ENCODE measurements at regions of chr6 and their contacts with region 1.

Region 1: GRCh38 chr6:125802943-125803377 is 12.2 kb downstream of the NCOA7 start:
- DNase-seq: no peak
- H3K4me3 Mint-ChIP-seq: no peak overlapping the region
- H3K27ac Mint-ChIP-seq: no peak overlapping the region
- H3K4me1 Mint-ChIP-seq: peaks cover 52% of the 10 kb centered on the region
- H3K27me3 Mint-ChIP-seq: no peaks in the 10 kb centered on the region

Region 2: GRCh38 chr6:125787791-125788190 is 15.2 kb before region 1 on chr6:
- intact Hi-C with region 1: no loop called
- DNase-seq: no peak
- H3K4me3 Mint-ChIP-seq: no peak overlapping the region
- H3K27ac Mint-ChIP-seq: no peak overlapping the region
- H3K4me1 Mint-ChIP-seq: peaks cover 38% of the 10 kb centered on the region
- H3K27me3 Mint-ChIP-seq: no peaks in the 10 kb centered on the region

Region 3: GRCh38 chr6:125829433-125829832 is 26.5 kb after region 1 on chr6:
- intact Hi-C with region 1: loop called (anchors 1 kb)
- DNase-seq: no peak
- H3K4me3 Mint-ChIP-seq: no peak overlapping the region
- H3K27ac Mint-ChIP-seq: no peak overlapping the region
- H3K4me1 Mint-ChIP-seq: peaks cover 61% of the 10 kb centered on the region
- H3K27me3 Mint-ChIP-seq: no peaks in the 10 kb centered on the region

Region 4: DNA sequence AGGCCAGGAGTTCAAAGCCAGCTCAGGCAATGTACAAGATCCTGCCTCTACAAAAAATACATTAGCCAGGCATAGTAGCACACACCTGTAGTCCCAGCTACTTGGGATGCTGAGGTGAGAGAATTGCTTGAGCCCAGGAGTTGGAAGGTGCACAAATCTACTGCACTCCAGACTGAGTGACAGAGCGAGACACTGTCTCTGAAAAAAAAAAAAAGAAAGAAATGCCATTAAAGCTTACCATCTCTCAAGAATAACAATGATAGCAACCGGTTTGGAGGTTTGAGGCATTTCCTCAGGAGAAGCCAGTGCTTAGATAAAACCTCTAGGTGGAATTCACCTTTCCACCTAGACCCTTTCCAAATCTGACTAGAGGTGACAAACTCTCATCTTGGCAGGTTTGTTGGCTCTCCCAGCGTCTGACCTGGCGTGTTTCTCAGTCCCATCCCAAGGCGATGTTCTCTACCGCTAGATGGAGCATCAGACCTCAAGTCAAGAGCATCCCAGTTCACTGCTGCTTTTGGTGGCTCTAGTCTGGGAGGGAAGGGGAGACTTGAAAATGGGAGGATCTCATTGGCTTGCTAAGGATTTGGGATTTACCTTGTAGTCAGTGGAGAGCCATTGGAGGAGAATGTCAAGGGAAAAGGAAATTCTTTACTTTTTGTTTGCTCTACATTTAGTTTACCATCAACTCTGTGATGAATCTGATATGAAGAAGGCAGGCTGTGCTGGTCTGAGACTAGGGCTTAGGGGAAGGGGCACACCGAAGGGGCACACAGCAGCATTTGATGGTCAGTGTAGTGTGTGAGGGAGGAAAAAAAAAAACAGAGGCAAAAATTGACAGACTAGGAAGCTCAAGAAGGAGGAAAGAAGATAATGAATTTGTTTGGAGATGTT is 55.7 kb after region 1 on chr6:
- intact Hi-C with region 1: no loop called
- DNase-seq: no peak
- H3K4me3 Mint-ChIP-seq: no peak overlapping the region
- H3K27ac Mint-ChIP-seq: no peak overlapping the region
- H3K4me1 Mint-ChIP-seq: peaks cover 3% of the 10 kb centered on the region
- H3K27me3 Mint-ChIP-seq: no peaks in the 10 kb centered on the region

Region 5: GRCh38 chr6:125904871-125905270 is 101.9 kb after region 1 on chr6:
- intact Hi-C with region 1: loop called (anchors 1 kb)
- DNase-seq: peak; percentile 22
- H3K4me3 Mint-ChIP-seq: no peak overlapping the region
- H3K27ac Mint-ChIP-seq: peak overlapping the region; percentile 73
- H3K4me1 Mint-ChIP-seq: peaks cover 38% of the 10 kb centered on the region
- H3K27me3 Mint-ChIP-seq: no peaks in the 10 kb centered on the region

Measured in activated T-helper 2 cell treated with anti-CD3 and anti-CD28 coated beads, Interferon-gamma antibody, Interleukin-2, Interleukin-4, amounts not matched to agents 10 μg/mL and 5 μg/mL and 100 μg/mL, durations not matched to agents 14 hours and 24 hours and 36 hours (primary cell).